RWPE1 (cell line): ENCODE measurements at regions of chr17 and their contacts with region 1.

Region 1: GRCh38 chr17:3913531-3914311 is 2.5 kb downstream of the P2RX1 start:
- DNase-seq: peak; percentile 70
- H3K27ac ChIP-seq: no peak overlapping the region
- CTCF ChIP-seq: peak; percentile 97

Region 2: GRCh38 chr17:3796110-3796821 is 117.5 kb before region 1 on chr17:
- CTCF ChIA-PET with region 1: no interaction called
- POLR2A ChIA-PET with region 1: no interaction called
- DNase-seq: no peak
- H3K27ac ChIP-seq: no peak overlapping the region
- CTCF ChIP-seq: no peak

Region 3: DNA sequence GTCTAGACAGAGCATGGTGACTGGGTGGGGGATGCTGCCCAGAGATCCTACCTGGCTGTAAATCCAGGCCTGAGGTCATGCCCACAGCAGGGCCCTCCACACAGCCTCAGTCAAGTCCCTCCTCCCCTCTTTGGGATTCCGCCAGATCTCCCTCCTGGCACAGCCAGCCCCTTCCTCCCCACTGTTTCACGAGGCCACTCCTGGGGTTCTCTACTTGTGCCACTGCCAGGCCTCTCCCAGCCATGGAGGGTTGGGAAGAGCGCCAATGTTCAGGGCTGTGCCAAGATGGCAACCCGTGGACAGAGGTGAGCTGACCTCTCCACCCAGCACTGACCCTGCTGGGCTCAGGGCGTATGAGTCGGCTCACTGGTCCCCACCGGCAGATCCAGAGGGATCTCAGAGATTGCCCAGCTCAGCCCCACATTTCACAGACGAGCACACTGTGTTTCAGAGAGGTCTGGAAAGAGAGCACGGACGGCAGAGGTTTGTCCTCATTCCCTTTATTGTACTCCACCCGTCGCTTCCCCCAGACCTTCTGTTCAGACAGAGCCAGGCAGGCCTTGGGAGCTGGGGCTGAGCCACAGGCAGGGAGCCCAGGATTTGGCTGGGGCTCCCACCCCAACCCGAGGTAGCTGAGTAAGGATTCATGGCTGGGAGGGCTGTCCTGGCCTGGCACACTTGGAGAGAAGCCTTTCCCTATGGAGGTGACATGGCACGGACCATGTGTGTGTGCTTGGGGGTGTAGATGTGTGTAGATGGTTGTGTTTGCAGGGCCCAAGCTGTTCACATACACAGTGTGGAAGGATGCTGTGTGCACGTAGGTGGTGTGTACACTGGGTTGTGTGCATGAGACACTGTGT is 17.4 kb before region 1 on chr17:
- CTCF ChIA-PET with region 1: interaction called, 10 read pairs
- POLR2A ChIA-PET with region 1: no interaction called
- DNase-seq: no peak
- H3K27ac ChIP-seq: peak overlapping the region; percentile 96
- CTCF ChIP-seq: no peak

Region 4: GRCh38 chr17:3924512-3925268 is 11.0 kb after region 1 on chr17:
- CTCF ChIA-PET with region 1: interaction called, 14 read pairs
- POLR2A ChIA-PET with region 1: no interaction called
- DNase-seq: no peak
- H3K27ac ChIP-seq: no peak overlapping the region
- CTCF ChIP-seq: no peak

Region 5: DNA sequence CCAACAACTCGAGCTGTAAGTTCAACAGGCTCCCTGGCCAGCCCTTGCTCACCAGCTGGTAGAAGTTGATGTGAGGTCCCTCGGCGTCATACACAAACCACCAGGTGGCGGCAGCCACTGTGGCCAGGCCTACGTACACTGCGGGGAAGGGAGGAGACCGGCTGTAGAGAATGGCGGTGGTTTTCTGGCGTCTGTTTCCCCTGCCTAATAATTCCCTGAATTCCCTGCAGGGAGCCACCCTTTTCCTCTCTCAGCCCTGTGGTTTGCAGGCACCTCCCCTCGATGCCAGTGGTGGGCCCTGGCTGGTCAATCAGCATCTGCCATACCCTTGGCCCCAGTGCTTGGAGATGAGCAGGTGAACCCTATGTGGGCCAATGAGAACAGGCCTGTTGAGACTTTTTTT is 21.4 kb after region 1 on chr17:
- CTCF ChIA-PET with region 1: interaction called, 13 read pairs
- POLR2A ChIA-PET with region 1: no interaction called
- DNase-seq: peak; percentile 60
- H3K27ac ChIP-seq: no peak overlapping the region
- CTCF ChIP-seq: no peak; the same call in 1 of the 2 replicates

Region 6: GRCh38 chr17:4004517-4005295 is 91.0 kb after region 1 on chr17:
- CTCF ChIA-PET with region 1: interaction called, 20 read pairs
- POLR2A ChIA-PET with region 1: no interaction called
- DNase-seq: peak; percentile 53
- H3K27ac ChIP-seq: no peak overlapping the region
- CTCF ChIP-seq: peak; percentile 76

Region 7: GRCh38 chr17:4375039-4375748 is 461.5 kb after region 1 on chr17:
- CTCF ChIA-PET with region 1: no interaction called
- POLR2A ChIA-PET with region 1: no interaction called
- DNase-seq: no peak
- H3K27ac ChIP-seq: no peak overlapping the region
- CTCF ChIP-seq: no peak